ENCODE measurements at regions of chr20 and their contacts with region 1.

Region 1: GRCh38 chr20:44966030-44966961 is at the start of gene STK4:
- DNase-seq: peak; percentile 92 to 97 (median 96)
- ATAC-seq: peak; percentile 77 to 83
- H3K4me3 Mint-ChIP-seq: peak within 1 kb of the TSS; percentile 88 to 99 (median 96)
- H3K27ac Mint-ChIP-seq: peak within 1 kb of the TSS; percentile 81 to 98 (median 94)
- H3K4me1 Mint-ChIP-seq: peaks cover 33 to 59% (median 49%) of the 10 kb centered on the region in 4 donors
- H3K27me3 Mint-ChIP-seq: no peaks in the 10 kb centered on the region
- polyA plus RNA-seq, gene STK4: 178 to 192 (median 188) TPM

Region 2: GRCh38 chr20:44885392-44886265 is 80.7 kb before region 1 on chr20 and contains the start of gene YWHAB:
- POLR2A ChIA-PET with region 1: interaction called, 21 read pairs
- DNase-seq: peak; percentile 93 to 98 (median 96)
- ATAC-seq: peak; percentile 93 to 96
- H3K4me3 Mint-ChIP-seq: peak within 1 kb of the TSS; percentile 88 to 98 (median 96)
- H3K27ac Mint-ChIP-seq: peak within 1 kb of the TSS; percentile 94 to 99 (median 97)
- H3K4me1 Mint-ChIP-seq: peaks cover 31 to 67% (median 64%) of the 10 kb centered on the region in 4 donors
- H3K27me3 Mint-ChIP-seq: no peaks in the 10 kb centered on the region
- polyA plus RNA-seq, gene YWHAB: 510 to 529 (median 523) TPM

Region 3: DNA sequence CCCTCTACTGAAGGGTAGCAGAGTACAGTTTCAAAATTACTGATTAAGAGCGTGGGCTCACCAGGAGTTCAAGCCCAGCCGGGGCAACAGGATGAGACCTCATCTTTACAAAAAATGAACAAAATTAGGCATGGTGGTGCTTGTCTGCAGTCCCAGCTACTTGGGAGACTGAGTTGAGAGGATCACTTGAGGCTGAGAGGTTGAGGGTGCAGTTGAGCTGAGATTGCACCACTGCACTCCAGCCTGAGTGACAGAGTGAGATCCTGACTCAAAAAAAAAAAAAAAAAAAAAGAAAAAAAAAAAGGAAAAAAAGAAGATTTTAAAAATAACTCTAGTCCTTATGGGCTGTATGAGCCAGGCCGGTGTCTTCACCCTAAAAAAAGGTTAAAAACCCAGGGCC is 37.7 kb before region 1 on chr20:
- POLR2A ChIA-PET with region 1: no interaction called
- DNase-seq: no peak
- ATAC-seq: no peak
- H3K4me3 Mint-ChIP-seq: no peak overlapping the region
- H3K27ac Mint-ChIP-seq: peak overlapping the region in 1 of 10 donors; percentile 27
- H3K4me1 Mint-ChIP-seq: peaks cover 0 to 1% (median 0%) of the 10 kb centered on the region in 4 donors
- H3K27me3 Mint-ChIP-seq: no peaks in the 10 kb centered on the region

Region 4: DNA sequence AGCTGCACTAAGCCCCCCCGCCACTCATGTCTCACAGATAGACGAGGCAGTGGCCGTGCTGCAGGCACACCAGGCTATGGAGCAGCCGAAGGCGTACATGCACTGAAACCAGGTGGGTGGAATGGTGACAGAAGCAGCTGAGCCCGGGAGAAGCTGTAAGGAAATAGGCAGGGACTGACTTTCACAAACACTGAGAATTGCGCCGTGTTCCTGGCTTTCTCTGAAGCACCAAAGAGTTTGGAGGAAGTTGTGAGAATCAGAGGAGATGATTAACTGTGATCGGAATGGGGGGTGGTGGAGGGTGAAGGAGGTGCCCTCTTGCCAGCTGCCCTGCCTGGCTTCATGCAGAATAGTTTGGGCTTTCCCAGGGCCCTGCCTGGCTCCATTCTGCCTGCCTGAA is 27.7 kb before region 1 on chr20:
- POLR2A ChIA-PET with region 1: no interaction called
- DNase-seq: no peak
- ATAC-seq: no peak
- H3K4me3 Mint-ChIP-seq: no peak overlapping the region
- H3K27ac Mint-ChIP-seq: peak overlapping the region in 3 of 10 donors; percentile 61 to 89 (median 76)
- H3K4me1 Mint-ChIP-seq: peaks cover 0 to 6% (median 0%) of the 10 kb centered on the region in 4 donors
- H3K27me3 Mint-ChIP-seq: no peaks in the 10 kb centered on the region

Region 5: DNA sequence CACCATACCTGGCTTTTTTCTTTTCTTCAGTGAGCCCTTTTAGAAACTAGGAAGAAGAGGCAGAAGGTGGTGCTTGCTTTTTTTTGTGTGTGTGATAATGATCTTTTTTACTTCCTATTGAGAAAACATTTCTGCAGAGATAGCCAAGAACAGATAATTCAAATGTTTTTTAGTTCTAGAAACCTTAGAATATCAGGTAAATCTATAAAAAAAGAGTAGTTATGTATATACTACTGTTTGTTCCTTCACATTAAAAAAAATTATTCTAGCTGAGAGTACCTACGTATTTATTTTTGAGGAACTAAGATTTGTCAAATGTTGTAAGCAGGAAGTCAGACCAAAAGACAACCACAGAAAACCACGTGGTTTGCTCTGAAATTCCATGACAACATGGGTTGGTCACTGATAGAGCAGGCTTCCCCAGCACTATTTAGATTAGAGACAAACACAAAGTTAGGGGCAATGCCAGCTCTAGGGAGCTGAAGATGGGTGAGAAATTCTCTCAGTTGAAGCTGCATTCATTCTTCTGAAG is 12.9 kb after region 1 on chr20:
- POLR2A ChIA-PET with region 1: interaction called, 196 read pairs
- DNase-seq: peak; percentile 27 to 91 (median 80)
- ATAC-seq: peak; percentile 80 to 90
- H3K4me3 Mint-ChIP-seq: peak overlapping the region; percentile 72 to 87 (median 82)
- H3K27ac Mint-ChIP-seq: peak overlapping the region; percentile 93 to 98 (median 97)
- H3K4me1 Mint-ChIP-seq: peaks cover 38 to 91% (median 84%) of the 10 kb centered on the region in 4 donors
- H3K27me3 Mint-ChIP-seq: no peaks in the 10 kb centered on the region

Region 6: DNA sequence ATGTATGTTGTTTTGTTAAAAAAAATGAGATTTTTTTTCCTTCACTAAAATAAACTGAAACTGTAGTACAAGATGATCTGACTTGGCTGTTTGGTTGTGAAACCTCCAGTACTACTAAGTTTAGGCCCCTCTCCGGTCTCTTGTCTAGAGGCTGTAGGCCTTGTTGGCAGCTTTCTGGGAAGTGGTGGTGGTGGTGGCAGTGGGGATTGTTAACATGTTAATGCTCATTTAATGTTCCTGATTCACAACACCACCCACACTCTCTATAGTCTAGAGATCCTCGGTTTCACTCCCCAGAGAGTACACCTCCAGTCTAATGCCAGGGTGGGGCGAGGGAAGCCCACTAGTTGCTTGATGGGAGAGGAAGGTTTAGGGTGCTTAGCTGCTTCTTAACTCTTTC is 24.1 kb after region 1 on chr20:
- POLR2A ChIA-PET with region 1: interaction called, 21 read pairs
- DNase-seq: peak in 1 of 10 donors; percentile 13
- ATAC-seq: peak; percentile 55 to 68
- H3K4me3 Mint-ChIP-seq: peak overlapping the region; percentile 66 to 88 (median 84)
- H3K27ac Mint-ChIP-seq: peak overlapping the region; percentile 83 to 97 (median 92)
- H3K4me1 Mint-ChIP-seq: peaks cover 32 to 79% (median 70%) of the 10 kb centered on the region in 4 donors
- H3K27me3 Mint-ChIP-seq: no peaks in the 10 kb centered on the region

Region 7: DNA sequence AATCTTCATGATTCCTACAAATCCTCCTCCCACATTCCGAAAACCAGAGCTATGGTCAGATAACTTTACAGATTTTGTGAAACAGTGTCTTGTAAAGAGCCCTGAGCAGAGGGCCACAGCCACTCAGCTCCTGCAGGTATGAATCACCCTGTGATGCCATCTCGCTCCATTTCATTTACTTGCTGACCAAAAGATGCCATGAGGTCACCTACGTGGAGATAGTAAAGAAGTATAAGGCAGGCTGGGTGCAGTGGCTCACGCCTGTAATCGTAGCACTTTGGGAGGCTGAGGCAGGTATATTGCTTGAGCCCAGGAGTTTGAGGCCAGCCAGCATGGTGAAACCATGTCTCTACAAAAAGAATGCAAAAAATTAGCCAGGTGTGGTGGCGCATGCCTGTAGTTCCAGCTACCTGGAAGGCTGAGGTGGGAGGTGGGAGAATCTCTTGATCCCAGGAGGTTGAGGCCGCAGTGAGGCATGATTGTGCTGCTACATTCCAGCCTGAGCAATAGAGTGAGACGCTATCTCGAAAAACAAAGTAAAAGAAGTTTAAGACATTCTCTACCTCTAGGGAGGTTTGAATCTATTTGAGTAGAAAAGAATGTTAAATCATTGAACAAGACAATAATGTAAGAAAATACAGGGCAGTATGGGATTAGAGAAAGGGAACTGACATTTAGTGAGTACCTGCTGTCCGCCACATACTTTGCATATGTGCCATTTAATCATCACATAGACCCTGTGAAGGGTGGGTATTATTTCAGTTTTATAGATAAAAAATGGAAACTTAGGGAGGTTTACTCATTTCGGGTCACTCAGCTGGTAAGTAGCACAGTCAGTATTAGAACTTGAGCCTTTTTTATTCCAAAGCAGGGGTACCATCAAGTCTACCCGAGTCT is 31.1 kb after region 1 on chr20:
- POLR2A ChIA-PET with region 1: interaction called, 12 read pairs
- DNase-seq: no peak
- ATAC-seq: no peak
- H3K4me3 Mint-ChIP-seq: peak overlapping the region in 2 of 10 donors; percentile 26 to 28
- H3K27ac Mint-ChIP-seq: peak overlapping the region; percentile 10 to 85 (median 80)
- H3K4me1 Mint-ChIP-seq: peaks cover 32 to 74% (median 66%) of the 10 kb centered on the region in 4 donors
- H3K27me3 Mint-ChIP-seq: no peaks in the 10 kb centered on the region

Measured in naive thymus-derived CD8-positive, alpha-beta T cell (primary cell).